Naive thymus-derived CD4-positive, alpha-beta T cell (primary cell): ENCODE measurements at regions of chr2 and their contacts with region 1.

Region 1: DNA sequence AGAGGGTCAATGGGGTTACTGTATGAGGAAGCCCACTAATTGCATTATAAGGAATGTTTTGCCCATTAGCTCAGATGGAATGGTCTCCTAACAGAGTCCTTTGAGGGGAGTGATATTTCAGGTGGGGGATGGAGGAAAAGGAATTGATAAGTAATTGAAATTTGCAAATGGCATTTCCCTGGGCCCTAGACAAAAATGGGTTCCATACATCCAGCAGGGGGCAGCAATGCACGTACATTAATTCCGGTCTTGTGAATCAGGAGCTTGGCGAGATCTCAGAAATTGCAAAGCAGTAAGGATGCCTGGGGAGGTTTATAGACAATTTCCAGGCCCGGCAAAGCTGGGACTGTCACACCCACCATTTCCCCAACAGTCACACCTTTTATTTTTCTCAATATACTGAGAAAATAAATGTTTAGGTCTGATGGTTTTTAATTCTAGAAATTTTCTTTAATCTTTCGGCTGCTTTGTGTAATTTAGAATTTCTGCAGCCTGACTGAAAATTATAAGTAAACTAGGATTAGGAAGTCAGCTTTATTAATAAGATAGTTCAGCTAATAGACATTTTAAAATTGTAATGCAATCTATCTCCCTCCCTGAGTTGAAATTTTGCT is 122.8 kb downstream of the LYPD1 start:
- DNase-seq: peak in 2 of 9 donors; percentile 4 to 34
- ATAC-seq: no peak
- H3K4me3 ChIP-seq: no peak overlapping the region
- H3K4me3 Mint-ChIP-seq: no peak overlapping the region
- H3K27ac ChIP-seq: no peak overlapping the region
- H3K27ac Mint-ChIP-seq: no peak overlapping the region
- H3K4me1 ChIP-seq: no peaks in the 10 kb centered on the region
- H3K4me1 Mint-ChIP-seq: no peaks in the 10 kb centered on the region
- H3K27me3 ChIP-seq: no peaks in the 10 kb centered on the region
- H3K27me3 Mint-ChIP-seq: peaks cover 0 to 8% (median 4%) of the 10 kb centered on the region in 5 donors

Region 2: DNA sequence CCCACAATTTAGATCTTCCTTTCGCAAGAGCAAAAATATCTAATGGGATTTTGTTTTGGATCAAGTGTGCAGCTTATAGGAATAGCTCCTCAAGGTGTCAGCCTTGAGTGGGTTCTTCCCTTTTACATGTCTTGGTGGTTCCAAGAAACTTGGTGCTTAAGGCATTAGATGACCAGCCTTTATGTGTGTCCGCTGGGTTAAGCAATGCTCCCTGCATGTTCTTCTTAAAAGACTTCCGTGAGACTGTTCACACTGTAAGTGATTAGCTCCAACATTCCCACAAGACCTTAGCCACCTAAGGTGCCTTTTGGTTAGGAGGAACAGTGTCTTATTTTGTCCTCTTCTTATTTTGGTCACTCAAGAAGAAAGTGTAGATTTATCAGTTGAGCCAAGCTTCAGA is 174.9 kb before region 1 on chr2:
- CTCF ChIA-PET with region 1: no interaction called
- POLR2A ChIA-PET with region 1: no interaction called
- intact Hi-C with region 1: no loop called
- DNase-seq: no peak
- ATAC-seq: no peak
- H3K4me3 ChIP-seq: no peak overlapping the region
- H3K4me3 Mint-ChIP-seq: no peak overlapping the region
- H3K27ac ChIP-seq: no peak overlapping the region
- H3K27ac Mint-ChIP-seq: no peak overlapping the region
- H3K4me1 ChIP-seq: no peaks in the 10 kb centered on the region
- H3K4me1 Mint-ChIP-seq: no peaks in the 10 kb centered on the region
- H3K27me3 ChIP-seq: no peaks in the 10 kb centered on the region
- H3K27me3 Mint-ChIP-seq: no peaks in the 10 kb centered on the region

Region 3: DNA sequence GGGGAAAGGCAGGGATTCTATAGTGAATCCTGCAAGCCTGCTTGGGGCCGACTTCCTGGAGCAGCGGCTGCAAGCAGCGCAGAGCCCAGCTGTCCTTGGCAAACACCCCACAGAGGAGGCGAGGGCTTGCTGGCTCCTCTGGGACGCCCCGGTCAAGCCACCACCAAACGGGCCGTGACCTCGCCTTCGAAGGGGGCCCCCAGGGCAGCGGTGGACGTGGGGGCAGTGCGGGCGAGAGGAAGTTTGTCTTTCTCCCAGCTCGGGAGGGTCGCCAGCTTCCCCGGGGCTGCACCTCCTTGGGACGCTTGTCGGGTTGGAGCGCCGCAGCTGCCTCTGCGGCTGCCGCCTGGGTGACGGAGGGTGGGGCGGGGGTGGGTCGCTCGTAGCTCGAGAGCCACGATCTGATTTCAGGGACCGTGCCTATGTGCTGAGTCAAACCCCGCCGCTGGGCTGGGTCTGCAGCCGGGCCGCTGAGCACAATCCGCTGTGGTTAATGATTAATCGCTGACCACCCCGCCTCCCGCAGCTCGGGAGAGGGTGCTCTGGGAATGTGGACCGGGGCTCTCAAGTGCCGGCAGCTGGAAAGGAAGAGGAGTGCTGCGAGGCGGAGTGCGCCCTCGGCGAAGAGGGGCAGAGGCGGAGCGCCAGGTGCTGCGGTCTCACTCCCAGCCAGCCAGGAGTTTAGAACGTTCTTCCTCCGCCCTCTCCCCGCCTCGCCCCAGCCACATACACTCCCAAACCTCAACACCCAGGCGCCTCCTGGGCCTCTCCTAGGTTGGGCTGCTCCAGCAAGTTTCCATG is 130.9 kb before region 1 on chr2 and contains the start of gene GPR39:
- CTCF ChIA-PET with region 1: no interaction called
- POLR2A ChIA-PET with region 1: no interaction called
- intact Hi-C with region 1: no loop called
- DNase-seq: no peak
- ATAC-seq: peak; percentile 20
- H3K4me3 ChIP-seq: no peak within 1 kb of the TSS
- H3K4me3 Mint-ChIP-seq: no peak within 1 kb of the TSS
- H3K27ac ChIP-seq: no peak within 1 kb of the TSS
- H3K27ac Mint-ChIP-seq: no peak within 1 kb of the TSS
- H3K4me1 ChIP-seq: no peaks in the 10 kb centered on the region
- H3K4me1 Mint-ChIP-seq: peaks cover 0 to 2% (median 0%) of the 10 kb centered on the region in 7 donors
- H3K27me3 ChIP-seq: no peaks in the 10 kb centered on the region
- H3K27me3 Mint-ChIP-seq: peaks cover 14 to 45% (median 32%) of the 10 kb centered on the region in 5 donors
- total RNA-seq, gene GPR39: not detected

Region 4: DNA sequence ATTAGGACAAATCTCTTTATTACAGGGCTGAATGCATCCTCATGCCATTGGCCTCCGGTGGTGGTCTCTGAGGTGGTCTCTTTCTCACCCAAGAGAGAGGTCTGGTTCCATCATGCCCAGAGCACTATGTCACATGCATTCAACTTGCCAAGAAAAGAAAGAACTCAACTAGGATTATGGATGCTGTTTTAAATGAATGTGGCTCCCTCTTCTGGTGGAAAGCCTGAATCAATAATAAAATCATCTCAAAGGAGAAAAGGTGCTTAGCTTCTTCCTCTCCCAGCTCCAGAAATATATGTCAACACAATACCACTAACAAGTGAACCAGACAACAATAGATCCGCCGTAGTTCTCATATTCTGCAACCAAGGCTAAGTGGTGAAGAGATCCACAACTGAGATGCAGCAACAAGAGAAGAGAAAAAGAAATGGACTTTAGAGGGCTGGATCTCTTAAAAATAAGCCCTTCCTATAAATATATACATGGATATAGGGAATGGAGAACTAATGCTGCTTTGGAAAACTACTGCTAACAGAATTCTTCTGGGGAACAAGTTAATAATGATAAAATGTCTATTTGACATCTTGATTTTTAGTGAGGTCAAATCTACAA is 624.3 kb after region 1 on chr2:
- CTCF ChIA-PET with region 1: no interaction called
- POLR2A ChIA-PET with region 1: no interaction called
- intact Hi-C with region 1: loop called in 1 of 2 experiments (anchors 1 kb)
- DNase-seq: peak in 1 of 9 donors; percentile 4
- ATAC-seq: no peak
- H3K4me3 ChIP-seq: no peak overlapping the region
- H3K4me3 Mint-ChIP-seq: no peak overlapping the region
- H3K27ac ChIP-seq: no peak overlapping the region
- H3K27ac Mint-ChIP-seq: no peak overlapping the region
- H3K4me1 ChIP-seq: no peaks in the 10 kb centered on the region
- H3K4me1 Mint-ChIP-seq: no peaks in the 10 kb centered on the region
- H3K27me3 ChIP-seq: no peaks in the 10 kb centered on the region
- H3K27me3 Mint-ChIP-seq: peaks cover 0 to 6% (median 0%) of the 10 kb centered on the region in 5 donors

Region 5: GRCh38 chr2:133561045-133561852 is 1014.1 kb after region 1 on chr2:
- CTCF ChIA-PET with region 1: no interaction called
- POLR2A ChIA-PET with region 1: no interaction called
- intact Hi-C with region 1: loop called in 1 of 2 experiments (anchors 5 kb)
- DNase-seq: no peak
- ATAC-seq: no peak
- H3K4me3 ChIP-seq: no peak overlapping the region
- H3K4me3 Mint-ChIP-seq: no peak overlapping the region
- H3K27ac ChIP-seq: no peak overlapping the region
- H3K27ac Mint-ChIP-seq: no peak overlapping the region
- H3K4me1 ChIP-seq: no peaks in the 10 kb centered on the region
- H3K4me1 Mint-ChIP-seq: no peaks in the 10 kb centered on the region
- H3K27me3 ChIP-seq: no peaks in the 10 kb centered on the region
- H3K27me3 Mint-ChIP-seq: peaks cover 0 to 20% (median 10%) of the 10 kb centered on the region in 5 donors

Region 6: GRCh38 chr2:133844214-133844892 is 1297.2 kb after region 1 on chr2:
- CTCF ChIA-PET with region 1: no interaction called
- POLR2A ChIA-PET with region 1: no interaction called
- intact Hi-C with region 1: loop called in 1 of 2 experiments (anchors 10 kb)
- DNase-seq: peak in 8 of 9 donors; percentile 18 to 60 (median 36)
- ATAC-seq: peak; percentile 72
- H3K4me3 ChIP-seq: no peak overlapping the region
- H3K4me3 Mint-ChIP-seq: peak overlapping the region in 1 of 10 donors; percentile 54
- H3K27ac ChIP-seq: no peak overlapping the region
- H3K27ac Mint-ChIP-seq: no peak overlapping the region
- H3K4me1 ChIP-seq: no peaks in the 10 kb centered on the region
- H3K4me1 Mint-ChIP-seq: peaks cover 0 to 7% (median 5%) of the 10 kb centered on the region in 7 donors
- H3K27me3 ChIP-seq: no peaks in the 10 kb centered on the region
- H3K27me3 Mint-ChIP-seq: peaks cover 11 to 20% (median 15%) of the 10 kb centered on the region in 5 donors